ENCODE measurements at regions of chr12 and their contacts with region 1.

Region 1: DNA sequence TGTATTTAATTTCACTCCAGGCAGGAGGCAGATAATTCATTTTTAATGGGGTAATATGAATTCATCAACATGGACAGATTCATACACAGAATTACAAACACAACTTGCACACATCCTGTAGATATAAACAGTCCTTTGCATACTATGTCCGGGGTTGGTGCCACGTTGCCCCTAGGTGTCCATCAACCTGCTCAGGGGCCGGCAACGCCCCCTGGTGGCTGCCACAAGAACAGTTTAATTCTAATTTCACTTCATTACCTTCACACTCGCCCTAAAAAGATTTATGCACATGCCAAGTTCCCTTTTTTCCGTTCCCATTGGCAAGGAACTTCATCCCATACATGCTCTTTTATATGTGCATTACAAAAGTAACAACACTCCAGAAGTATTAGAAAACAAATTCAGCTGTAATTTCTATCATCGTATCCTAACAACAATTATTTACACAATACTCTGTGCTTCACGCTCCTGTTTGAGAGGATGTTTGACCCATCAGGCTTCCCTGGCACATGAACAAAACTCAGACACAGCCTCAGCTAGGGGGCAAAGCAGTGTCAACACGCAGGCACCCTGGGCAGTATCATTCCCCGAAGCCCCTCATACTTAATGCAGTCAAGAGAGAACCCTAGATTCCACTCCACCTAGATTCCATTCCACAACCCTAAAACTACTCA is 15.5 kb downstream of the MANSC1 start:
- DNase-seq: peak; percentile 67
- H3K4me3 ChIP-seq: no peak overlapping the region
- H3K27ac ChIP-seq: no peak overlapping the region
- H3K4me1 ChIP-seq: peaks cover 44% of the 10 kb centered on the region
- H3K27me3 ChIP-seq: no peaks in the 10 kb centered on the region
- CTCF ChIP-seq: peak; percentile 76 to 83
- POLR2A ChIP-seq: peak; percentile 40

Region 2: GRCh38 chr12:12039897-12040296 is 294.6 kb before region 1 on chr12:
- CTCF ChIA-PET with region 1: interaction called, 80 read pairs
- POLR2A ChIA-PET with region 1: no interaction called
- dilution Hi-C with region 1: no loop called
- intact Hi-C with region 1: no loop called
- DNase-seq: no peak
- H3K4me3 ChIP-seq: no peak overlapping the region
- H3K27ac ChIP-seq: no peak overlapping the region
- H3K4me1 ChIP-seq: no peaks in the 10 kb centered on the region
- H3K27me3 ChIP-seq: peaks cover 4 to 6% of the 10 kb centered on the region in 2 experiments
- CTCF ChIP-seq: no peak
- POLR2A ChIP-seq: no peak

Region 3: GRCh38 chr12:12266873-12267741 is 67.4 kb before region 1 on chr12 and contains the start of gene LRP6:
- CTCF ChIA-PET with region 1: interaction called, 3 read pairs
- POLR2A ChIA-PET with region 1: interaction called, 7 read pairs
- dilution Hi-C with region 1: no loop called
- intact Hi-C with region 1: loop called (anchors 2 kb)
- DNase-seq: peak; percentile 93
- H3K4me3 ChIP-seq: peak within 1 kb of the TSS; percentile 65 to 96 (median 88)
- H3K27ac ChIP-seq: peak within 1 kb of the TSS; percentile 100
- H3K4me1 ChIP-seq: peaks cover 12% of the 10 kb centered on the region
- H3K27me3 ChIP-seq: no peaks in the 10 kb centered on the region
- CTCF ChIP-seq: no peak
- POLR2A ChIP-seq: peak; percentile 92
- total RNA-seq, gene LRP6: 40.1 and 41.7 TPM in 2 replicates

Region 4: DNA sequence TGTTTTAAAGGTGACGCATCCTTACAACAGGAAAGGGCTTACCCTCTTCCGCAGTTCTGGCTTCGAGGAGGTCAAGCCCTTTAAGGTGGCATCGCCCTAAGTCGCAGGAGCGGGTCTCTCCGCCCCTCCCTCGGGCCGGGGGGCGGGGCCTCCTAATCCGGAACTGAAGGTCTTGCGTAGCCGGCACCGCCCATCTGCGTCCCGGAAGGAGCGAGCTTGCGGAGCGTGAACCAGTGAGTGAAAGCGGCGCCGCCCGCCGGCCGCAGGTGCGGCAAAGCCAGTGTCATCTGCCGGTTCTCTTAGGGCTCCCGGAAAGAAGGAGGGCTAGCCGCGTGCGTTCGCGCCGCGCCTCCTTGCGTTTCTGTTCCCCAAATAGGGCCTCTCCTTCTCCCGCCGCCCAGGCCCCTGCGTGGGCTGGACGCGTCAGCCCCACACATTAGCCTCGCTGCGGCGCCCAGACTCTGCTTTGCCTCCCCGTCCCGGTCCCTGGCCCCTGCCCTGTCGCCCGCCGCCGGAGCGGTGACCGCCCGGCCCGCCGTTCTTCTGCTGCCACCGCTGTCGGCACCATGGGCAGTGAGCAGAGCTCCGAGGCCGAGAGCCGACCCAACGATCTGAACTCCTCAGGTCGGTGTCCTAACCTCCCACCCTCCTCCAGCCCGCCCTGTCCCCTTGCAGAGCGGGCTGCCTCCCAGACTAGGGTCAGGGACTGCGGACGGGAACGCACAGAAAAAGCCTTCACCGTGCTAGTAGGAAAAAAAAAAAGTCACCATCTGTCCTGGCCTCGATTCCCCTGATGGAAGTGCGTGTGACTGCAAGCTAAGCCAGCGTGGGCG is 22.6 kb after region 1 on chr12 and contains the start of gene BORCS5:
- CTCF ChIA-PET with region 1: interaction called, 31 read pairs
- POLR2A ChIA-PET with region 1: interaction called, 9 read pairs
- dilution Hi-C with region 1: no loop called
- intact Hi-C with region 1: loop called (anchors 1 kb)
- DNase-seq: peak; percentile 90
- H3K4me3 ChIP-seq: peak within 1 kb of the TSS; percentile 45 to 89 (median 76)
- H3K27ac ChIP-seq: peak within 1 kb of the TSS; percentile 71
- H3K4me1 ChIP-seq: peaks cover 11% of the 10 kb centered on the region
- H3K27me3 ChIP-seq: no peaks in the 10 kb centered on the region
- CTCF ChIP-seq: peak in 1 of 2 donors; percentile 31
- POLR2A ChIP-seq: peak; percentile 93
- total RNA-seq, gene BORCS5: 10.5 and 11.5 TPM in 2 replicates

Region 5: DNA sequence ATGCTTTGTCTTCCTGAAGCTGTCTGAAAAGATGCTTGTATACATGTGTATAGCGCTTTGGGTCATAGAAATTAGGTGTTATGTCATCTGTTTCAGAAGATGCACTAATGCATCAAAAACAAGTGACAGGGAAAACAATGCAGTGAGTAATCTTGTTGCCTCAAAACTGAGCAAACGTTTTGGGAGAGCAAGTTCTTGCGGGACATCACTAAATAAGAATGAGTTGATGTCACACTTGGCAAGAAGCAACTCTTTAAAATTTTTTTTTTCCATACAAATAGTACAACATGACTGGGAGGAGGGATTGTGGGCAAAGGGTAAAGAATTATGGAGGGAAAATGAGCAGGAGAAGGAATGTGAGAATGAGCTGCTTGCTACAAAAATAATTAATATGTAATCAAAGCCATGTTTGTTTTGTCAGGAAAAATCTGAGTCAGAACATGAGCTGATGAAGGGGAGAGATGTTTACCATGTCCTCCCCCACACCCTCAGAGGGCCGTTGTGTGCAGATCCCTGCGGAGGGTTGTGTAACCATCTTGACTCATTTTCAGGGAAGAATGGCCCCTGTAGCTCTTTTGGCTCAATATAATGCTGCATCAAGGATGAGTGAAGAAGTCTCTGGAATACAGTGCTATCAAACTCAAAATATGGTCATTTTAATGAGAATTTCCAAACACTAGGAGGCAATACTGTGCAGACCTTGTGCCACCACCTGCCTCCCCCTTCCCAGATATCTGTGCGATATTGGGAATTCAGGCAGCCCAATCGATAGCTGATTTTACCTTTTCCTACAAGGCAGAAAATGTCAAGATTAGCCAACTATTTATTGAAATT is 63.7 kb after region 1 on chr12:
- CTCF ChIA-PET with region 1: no interaction called
- POLR2A ChIA-PET with region 1: no interaction called
- dilution Hi-C with region 1: no loop called
- intact Hi-C with region 1: no loop called
- DNase-seq: peak; percentile 75
- H3K4me3 ChIP-seq: no peak overlapping the region
- H3K27ac ChIP-seq: peak overlapping the region; percentile 50
- H3K4me1 ChIP-seq: peaks cover 13% of the 10 kb centered on the region
- H3K27me3 ChIP-seq: no peaks in the 10 kb centered on the region
- CTCF ChIP-seq: peak in 1 of 2 donors; percentile 8
- POLR2A ChIP-seq: no peak

Region 6: GRCh38 chr12:12510141-12510540 is 175.6 kb after region 1 on chr12:
- CTCF ChIA-PET with region 1: no interaction called
- POLR2A ChIA-PET with region 1: no interaction called
- dilution Hi-C with region 1: no loop called
- intact Hi-C with region 1: no loop called
- DNase-seq: no peak
- H3K4me3 ChIP-seq: no peak overlapping the region
- H3K27ac ChIP-seq: no peak overlapping the region
- H3K4me1 ChIP-seq: peaks cover 16% of the 10 kb centered on the region
- H3K27me3 ChIP-seq: no peaks in the 10 kb centered on the region
- CTCF ChIP-seq: no peak
- POLR2A ChIP-seq: no peak